Activated CD4-positive, alpha-beta T cell treated with anti-CD3 and anti-CD28 coated beads for 36 hours (primary cell): ENCODE measurements at regions of chr11 and their contacts with region 1.

Region 1: DNA sequence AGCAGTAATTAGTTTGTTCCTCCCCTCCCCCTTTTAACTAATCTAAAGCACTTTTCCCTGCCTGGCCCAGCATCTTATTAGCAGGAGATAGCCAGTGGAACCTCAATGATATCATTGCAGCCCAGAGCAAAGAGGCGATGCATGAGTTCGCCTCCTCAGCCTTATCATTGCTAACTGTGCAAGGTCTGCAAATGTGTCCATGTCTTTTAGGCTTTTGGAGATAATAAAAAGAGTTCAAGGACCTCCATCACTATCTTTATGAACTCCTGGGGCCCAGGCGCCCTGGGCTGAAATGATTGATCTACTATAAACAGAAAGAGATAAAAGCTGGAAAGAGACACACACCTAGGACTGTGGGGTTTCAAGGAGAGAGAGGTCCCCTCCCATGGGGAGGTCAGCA is 124.2 kb upstream of the TBCEL start:
- DNase-seq: no peak
- ATAC-seq: no peak
- H3K4me3 Mint-ChIP-seq: no peak overlapping the region
- H3K27ac Mint-ChIP-seq: no peak overlapping the region
- H3K4me1 Mint-ChIP-seq: no peaks in the 10 kb centered on the region
- H3K27me3 Mint-ChIP-seq: peaks cover 4% of the 10 kb centered on the region

Region 2: GRCh38 chr11:120482149-120482548 is 417.6 kb before region 1 on chr11:
- CTCF ChIA-PET with region 1: no interaction called
- POLR2A ChIA-PET with region 1: interaction called, 10 read pairs
- intact Hi-C with region 1: no loop called
- DNase-seq: no peak
- ATAC-seq: no peak
- H3K4me3 Mint-ChIP-seq: no peak overlapping the region
- H3K27ac Mint-ChIP-seq: no peak overlapping the region
- H3K4me1 Mint-ChIP-seq: peaks cover 3% of the 10 kb centered on the region
- H3K27me3 Mint-ChIP-seq: no peaks in the 10 kb centered on the region

Region 3: GRCh38 chr11:121048464-121049233 is 148.9 kb after region 1 on chr11:
- CTCF ChIA-PET with region 1: no interaction called
- POLR2A ChIA-PET with region 1: no interaction called
- intact Hi-C with region 1: no loop called
- DNase-seq: no peak
- ATAC-seq: no peak
- H3K4me3 Mint-ChIP-seq: no peak overlapping the region
- H3K27ac Mint-ChIP-seq: no peak overlapping the region
- H3K4me1 Mint-ChIP-seq: no peaks in the 10 kb centered on the region
- H3K27me3 Mint-ChIP-seq: no peaks in the 10 kb centered on the region